HEK293 (cell line): ENCODE measurements at regions of chr19 and their contacts with region 1.

Region 1: DNA sequence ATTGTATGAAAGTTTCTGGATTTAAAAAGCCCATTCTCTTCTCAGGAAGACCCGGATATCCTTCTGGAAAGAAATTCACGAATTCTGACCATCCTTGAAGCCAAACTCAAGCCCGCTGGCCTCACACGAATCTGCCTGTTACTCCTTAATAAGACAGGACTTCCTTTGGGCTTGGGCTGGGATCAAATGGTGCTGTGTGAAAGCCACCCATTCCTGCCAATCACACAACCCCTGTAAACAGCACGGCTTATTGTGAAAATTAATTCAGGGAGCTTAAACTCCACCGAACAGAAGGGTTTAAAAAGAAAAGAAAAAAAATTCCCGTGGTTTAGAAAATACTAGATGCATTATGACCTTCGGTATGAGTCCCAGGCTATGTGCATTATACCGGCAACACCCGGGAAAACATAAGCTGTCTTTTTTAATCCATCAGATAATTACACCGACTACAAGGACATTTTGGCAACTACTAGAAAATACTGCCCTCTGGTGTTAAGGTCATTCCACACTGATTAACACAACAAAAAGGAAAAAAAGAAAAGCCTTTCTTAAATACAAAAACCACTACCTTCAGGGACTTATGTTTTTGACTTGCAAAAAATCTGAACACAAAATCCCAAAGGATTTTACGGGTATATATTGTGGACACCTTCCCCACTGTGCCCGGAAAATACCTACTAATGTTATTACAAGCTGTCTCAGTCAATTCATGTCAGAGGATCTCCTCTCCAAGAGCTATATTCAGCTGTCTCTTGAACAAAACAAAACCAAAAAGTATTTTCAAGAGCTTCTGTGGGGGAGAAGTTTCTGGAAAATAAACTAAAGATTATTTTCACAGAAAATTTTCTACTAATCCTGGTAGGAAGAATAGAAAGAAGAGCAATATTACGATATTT is 76.0 kb upstream of the LSM14A start:
- H3K4me3 ChIP-seq: no peak overlapping the region
- H3K27ac ChIP-seq: no peak overlapping the region
- H3K4me1 ChIP-seq: peaks cover 9% of the 10 kb centered on the region
- CTCF ChIP-seq: peak; percentile 84

Region 2: DNA sequence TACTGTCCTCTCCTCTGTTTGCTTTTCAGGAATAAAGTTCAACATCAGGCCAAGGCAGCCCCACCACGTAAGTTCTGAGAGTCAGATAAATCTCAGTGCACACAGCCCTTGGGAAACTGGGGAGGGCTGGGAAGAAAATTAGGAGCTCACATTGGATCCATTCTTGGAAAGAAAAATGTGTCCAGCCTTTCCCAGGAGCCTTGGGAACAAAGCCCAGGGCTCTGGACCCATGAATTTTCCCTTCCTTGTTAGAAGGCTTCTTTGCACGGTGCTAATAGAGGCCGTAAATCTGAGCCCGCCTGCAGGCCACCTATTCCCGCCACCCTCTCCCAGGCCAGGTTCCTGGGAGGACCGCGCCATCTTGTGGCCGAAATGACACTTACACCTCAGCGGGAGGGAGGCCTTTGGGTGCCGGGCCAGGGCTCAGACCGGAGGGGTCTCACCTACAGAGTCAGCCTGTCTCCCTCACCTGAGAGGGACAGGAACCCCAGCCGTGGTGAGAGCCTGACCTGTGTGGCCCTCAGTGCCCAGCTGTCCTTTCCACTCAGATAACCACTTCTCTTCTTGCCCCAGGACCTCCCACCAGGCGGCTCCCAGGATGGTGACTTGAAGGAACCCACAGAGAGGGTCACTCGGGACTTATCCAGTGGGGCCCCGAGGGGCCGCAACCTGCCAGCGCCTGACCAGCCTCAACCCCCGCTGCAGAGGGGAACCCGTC is 324.7 kb before region 1 on chr19:
- CTCF ChIA-PET with region 1: interaction called, 341 read pairs
- POLR2A ChIA-PET with region 1: no interaction called
- H3K4me3 ChIP-seq: no peak overlapping the region
- H3K27ac ChIP-seq: no peak overlapping the region
- H3K4me1 ChIP-seq: no peaks in the 10 kb centered on the region
- CTCF ChIP-seq: peak; percentile 99

Region 3: DNA sequence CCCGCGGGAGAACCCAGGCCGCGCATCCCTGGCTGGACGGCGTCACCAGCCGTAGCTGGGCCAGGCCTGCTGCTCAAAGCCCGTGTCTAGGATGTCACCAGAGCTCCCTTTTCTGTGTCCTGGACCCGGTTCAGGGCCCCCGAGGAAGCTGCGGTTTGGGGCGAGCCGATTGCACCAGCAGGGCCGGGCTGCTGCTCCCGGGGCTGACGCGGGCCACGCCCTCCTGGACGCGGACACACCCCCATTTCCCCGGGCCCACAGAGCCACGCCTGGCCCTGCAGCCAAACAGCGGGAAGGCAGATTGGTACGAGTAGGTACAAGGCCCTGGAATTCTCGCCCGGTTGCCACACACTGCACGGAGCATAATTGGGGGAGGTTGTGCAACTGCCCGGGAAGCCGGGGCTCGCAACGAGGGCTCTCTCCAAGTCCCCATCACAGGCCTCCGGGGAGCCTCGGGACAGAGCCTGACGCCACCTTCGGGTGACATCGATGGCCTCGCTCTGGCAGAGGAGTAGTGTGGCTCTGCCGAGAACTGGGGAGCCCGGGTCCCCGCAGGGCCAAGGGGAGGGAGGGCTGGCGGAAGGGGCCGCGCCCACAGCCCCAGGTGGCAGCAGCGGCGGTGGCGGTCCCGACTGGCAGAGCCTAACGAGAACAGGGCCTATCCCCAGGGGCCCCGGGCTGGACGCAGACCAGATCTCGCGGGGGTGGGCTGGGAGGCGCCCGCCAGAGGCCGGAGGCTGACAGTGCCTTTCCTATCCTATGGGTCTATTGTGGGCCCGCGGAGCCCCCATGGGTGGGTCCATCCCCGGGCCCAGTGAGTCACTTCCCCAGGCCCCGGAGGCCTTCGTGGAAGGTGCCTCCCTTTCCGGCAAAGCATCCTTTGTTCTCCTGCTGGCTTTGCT is 276.1 kb before region 1 on chr19:
- CTCF ChIA-PET with region 1: interaction called, 11 read pairs
- POLR2A ChIA-PET with region 1: no interaction called
- H3K4me3 ChIP-seq: peak overlapping the region; percentile 18
- H3K27ac ChIP-seq: peak overlapping the region; percentile 74; the same call in 1 of the 2 replicates
- H3K4me1 ChIP-seq: peaks cover 19% of the 10 kb centered on the region
- CTCF ChIP-seq: peak; percentile 13

Region 4: DNA sequence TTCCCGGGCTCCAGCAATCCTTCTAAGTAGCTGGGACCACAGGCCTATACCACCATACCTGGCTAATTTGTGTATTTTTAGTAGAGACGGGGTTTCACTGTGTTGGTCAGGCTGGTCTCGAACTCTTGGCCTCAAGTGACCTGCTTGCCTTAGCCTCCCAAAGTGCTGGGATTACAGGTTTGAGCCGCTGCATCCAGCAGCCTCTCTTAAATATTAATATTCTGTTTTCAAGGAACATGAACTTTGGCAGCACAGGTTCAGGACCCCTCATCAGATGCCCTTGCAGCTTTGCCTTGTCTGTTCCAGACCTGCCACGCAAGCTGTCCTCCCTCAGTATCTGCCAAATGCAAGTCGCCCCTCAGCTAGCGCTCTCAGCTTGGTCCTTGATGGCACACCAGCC is 132.8 kb before region 1 on chr19:
- CTCF ChIA-PET with region 1: interaction called, 12 read pairs
- POLR2A ChIA-PET with region 1: no interaction called
- H3K4me3 ChIP-seq: no peak overlapping the region
- H3K27ac ChIP-seq: no peak overlapping the region
- H3K4me1 ChIP-seq: no peaks in the 10 kb centered on the region
- CTCF ChIP-seq: no peak

Region 5: GRCh38 chr19:34023381-34023780 is 72.9 kb before region 1 on chr19:
- CTCF ChIA-PET with region 1: interaction called, 25 read pairs
- POLR2A ChIA-PET with region 1: no interaction called
- H3K4me3 ChIP-seq: no peak overlapping the region
- H3K27ac ChIP-seq: no peak overlapping the region
- H3K4me1 ChIP-seq: no peaks in the 10 kb centered on the region
- CTCF ChIP-seq: no peak

Region 6: GRCh38 chr19:34067861-34068271 is 28.4 kb before region 1 on chr19:
- CTCF ChIA-PET with region 1: interaction called, 46 read pairs
- POLR2A ChIA-PET with region 1: no interaction called
- H3K4me3 ChIP-seq: no peak overlapping the region
- H3K27ac ChIP-seq: no peak overlapping the region
- H3K4me1 ChIP-seq: peaks cover 3% of the 10 kb centered on the region; the same call in 1 of the 2 replicates
- CTCF ChIP-seq: no peak

Region 7: DNA sequence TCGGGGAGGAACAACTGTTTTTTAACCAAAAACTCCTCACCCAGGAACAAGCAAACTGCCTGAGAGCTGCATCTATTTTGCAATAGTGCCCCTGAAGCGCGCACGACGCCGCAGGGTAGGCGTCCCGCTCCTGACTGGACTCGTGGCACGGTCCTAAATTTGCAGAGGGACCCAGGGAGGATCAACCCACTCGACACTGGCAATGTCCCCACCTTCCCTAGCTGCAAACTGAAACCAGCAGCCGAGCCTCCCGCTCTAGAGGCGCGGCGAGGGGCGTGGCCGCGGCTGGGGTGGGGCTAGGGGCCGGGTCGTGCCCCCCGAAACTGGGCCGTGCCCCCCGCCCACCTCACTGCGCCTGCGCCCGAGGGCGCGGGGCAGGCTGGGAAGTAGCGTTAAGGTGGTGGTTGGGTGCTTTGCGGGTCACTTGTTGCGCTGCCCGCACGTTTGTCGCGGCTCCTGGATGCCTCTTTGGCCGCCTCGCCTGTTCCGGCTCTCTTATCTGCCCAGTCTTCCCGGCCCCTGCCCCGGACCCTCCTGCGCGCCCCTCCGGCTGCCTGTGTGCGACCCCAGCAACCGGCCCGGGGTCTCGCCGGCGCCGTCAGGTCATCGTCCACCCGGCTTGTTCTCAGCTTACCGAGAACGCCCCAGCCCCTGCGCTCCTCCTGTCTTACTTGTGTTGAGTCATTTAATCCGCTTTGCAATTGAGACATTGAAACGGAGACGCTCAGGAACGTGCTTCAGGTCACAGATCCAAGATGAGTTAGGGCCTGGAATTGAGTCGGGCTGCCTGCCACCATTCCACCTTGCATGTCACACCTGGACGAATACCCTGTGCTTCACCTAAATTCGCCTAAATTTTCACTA is 38.2 kb after region 1 on chr19:
- CTCF ChIA-PET with region 1: interaction called, 24 read pairs
- POLR2A ChIA-PET with region 1: interaction called, 3 read pairs
- H3K4me3 ChIP-seq: peak overlapping the region; percentile 53
- H3K27ac ChIP-seq: peak overlapping the region; percentile 99
- H3K4me1 ChIP-seq: peaks cover 11% of the 10 kb centered on the region
- CTCF ChIP-seq: peak; percentile 79; the same call in 1 of the 2 replicates